ENCODE measurements at regions of chr22 and their contacts with region 1.

Region 1: DNA sequence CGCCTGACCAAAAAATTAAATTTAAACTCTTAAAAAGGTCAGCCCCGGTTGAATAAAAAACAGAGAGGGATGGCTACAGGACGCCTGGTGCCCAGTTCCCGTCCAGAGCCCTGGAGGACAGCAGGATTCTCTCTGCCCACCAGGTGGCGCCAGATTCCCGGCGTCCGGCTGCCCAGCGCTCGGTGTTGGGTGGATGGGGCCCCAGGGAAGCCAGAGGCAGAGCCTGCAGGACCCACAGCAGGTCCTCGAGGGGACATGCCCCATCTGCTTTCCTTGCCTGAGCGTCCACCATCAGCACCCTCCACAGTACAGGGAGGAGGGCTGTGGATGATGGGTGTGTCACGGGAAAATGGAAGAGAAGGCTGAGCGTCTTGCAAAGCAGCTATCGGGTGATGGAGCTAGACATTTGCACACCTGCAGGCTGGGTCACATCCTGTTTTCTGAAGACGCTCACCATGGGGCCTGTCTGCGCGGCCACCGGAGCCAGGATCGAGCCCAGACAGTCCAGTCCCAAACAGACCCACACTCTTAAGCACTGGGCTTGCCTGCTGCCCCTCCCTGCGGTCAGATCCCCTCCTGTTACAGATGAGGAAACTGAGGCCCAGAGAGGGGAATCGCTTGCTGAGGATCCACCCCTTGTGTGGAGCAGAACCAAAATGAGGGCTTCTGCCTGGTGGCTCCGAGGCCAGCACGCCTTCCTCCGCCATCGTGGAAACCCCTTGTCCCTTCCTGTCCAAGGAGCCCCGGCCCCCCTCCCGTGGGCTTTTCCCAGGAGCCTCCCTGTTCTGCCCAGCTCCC is 18.5 kb upstream of the CBX7 start:
- DNase-seq: peak; percentile 73 to 95 (median 85)
- ATAC-seq: peak; percentile 57
- H3K4me3 ChIP-seq: peak overlapping the region; percentile 26 to 28
- H3K4me3 Mint-ChIP-seq: peak overlapping the region; percentile 54
- H3K27ac ChIP-seq: peak overlapping the region; percentile 25 to 42
- H3K27ac Mint-ChIP-seq: peak overlapping the region; percentile 94
- H3K4me1 ChIP-seq: peaks cover 49% of the 10 kb centered on the region
- H3K4me1 Mint-ChIP-seq: peaks cover 47% of the 10 kb centered on the region
- H3K27me3 ChIP-seq: peaks cover 0 to 3% of the 10 kb centered on the region in 2 experiments
- H3K27me3 Mint-ChIP-seq: no peaks in the 10 kb centered on the region
- CTCF ChIP-seq: peak; percentile 98

Region 2: DNA sequence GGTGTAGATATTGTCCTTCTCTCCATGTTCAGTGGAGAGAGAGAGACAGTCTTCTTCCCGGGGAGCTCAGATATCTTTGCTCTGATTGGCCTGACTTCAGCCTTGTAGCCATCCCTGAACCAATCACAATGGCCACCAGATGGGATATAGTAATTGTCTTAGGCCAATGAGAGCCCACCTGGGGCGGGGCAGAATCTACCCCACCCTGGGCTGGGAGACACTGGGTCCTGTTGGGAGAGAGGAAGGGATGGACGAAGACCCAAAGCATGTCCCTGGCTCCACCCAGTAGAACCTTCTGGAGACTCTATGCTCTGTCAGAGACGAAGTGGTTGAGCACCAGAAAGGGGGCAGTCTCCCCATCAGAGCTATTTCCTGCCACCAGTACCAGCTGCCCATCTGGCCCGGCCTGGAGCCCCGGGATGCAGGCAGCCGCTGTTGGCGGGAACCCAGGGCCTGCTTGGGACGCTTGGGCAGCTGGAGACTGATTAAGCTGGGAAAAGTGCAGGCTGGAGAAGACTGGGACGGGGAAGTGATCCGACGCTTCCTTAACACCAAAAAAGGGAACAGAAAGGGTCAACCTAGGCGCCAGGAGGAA is 13.1 kb after region 1 on chr22:
- CTCF ChIA-PET with region 1: interaction called, 21 read pairs
- POLR2A ChIA-PET with region 1: interaction called, 3 read pairs
- intact Hi-C with region 1: no loop called
- DNase-seq: peak in 1 of 9 experiments; percentile 35
- ATAC-seq: no peak
- H3K4me3 ChIP-seq: no peak overlapping the region
- H3K4me3 Mint-ChIP-seq: no peak overlapping the region
- H3K27ac ChIP-seq: no peak overlapping the region
- H3K27ac Mint-ChIP-seq: no peak overlapping the region
- H3K4me1 ChIP-seq: no peaks in the 10 kb centered on the region
- H3K4me1 Mint-ChIP-seq: peaks cover 3% of the 10 kb centered on the region
- H3K27me3 ChIP-seq: no peaks in the 10 kb centered on the region
- H3K27me3 Mint-ChIP-seq: no peaks in the 10 kb centered on the region
- CTCF ChIP-seq: no peak

Region 3: DNA sequence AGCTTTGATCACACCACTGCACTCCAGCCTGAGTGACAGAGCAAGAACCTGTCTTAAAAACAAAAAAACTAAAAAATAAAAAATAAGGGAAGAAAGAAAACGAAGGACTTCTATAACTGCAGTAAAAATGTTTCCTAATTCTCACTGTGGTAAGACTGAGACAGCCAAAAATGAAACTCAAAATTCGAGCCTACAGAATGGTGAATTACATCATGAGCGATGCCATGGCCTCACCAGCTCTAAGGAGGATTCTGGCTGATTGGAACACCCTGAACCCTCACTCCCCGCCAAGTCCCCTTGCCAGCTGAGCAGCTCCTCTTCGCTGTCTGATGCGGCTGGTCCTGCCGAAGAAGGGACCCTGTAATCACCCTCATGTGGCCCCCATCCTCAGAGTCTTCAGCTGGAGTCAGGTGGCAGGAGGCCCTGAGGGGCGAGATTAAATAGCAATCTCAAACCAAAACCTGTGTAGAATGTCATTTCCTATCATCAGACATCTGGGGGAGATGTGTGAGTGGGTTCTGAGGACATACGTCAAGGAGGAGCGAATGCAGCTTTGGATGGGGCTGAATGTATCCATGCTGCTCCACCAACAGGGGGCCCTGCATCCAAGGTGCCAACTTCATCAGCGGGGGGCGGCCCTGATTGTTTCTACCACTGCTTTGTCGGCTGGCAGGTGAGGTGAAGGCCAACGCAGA is 44.5 kb after region 1 on chr22:
- CTCF ChIA-PET with region 1: interaction called, 19 read pairs
- POLR2A ChIA-PET with region 1: no interaction called
- intact Hi-C with region 1: loop called in 1 of 2 experiments (anchors 5 kb)
- DNase-seq: peak in 5 of 9 experiments; percentile 60 to 78 (median 67)
- ATAC-seq: peak; percentile 98
- H3K4me3 ChIP-seq: no peak overlapping the region
- H3K4me3 Mint-ChIP-seq: no peak overlapping the region
- H3K27ac ChIP-seq: no peak overlapping the region
- H3K27ac Mint-ChIP-seq: peak overlapping the region; percentile 57
- H3K4me1 ChIP-seq: peaks cover 4% of the 10 kb centered on the region
- H3K4me1 Mint-ChIP-seq: peaks cover 6% of the 10 kb centered on the region
- H3K27me3 ChIP-seq: no peaks in the 10 kb centered on the region
- H3K27me3 Mint-ChIP-seq: peaks cover 18% of the 10 kb centered on the region
- CTCF ChIP-seq: peak; percentile 42

Region 4: DNA sequence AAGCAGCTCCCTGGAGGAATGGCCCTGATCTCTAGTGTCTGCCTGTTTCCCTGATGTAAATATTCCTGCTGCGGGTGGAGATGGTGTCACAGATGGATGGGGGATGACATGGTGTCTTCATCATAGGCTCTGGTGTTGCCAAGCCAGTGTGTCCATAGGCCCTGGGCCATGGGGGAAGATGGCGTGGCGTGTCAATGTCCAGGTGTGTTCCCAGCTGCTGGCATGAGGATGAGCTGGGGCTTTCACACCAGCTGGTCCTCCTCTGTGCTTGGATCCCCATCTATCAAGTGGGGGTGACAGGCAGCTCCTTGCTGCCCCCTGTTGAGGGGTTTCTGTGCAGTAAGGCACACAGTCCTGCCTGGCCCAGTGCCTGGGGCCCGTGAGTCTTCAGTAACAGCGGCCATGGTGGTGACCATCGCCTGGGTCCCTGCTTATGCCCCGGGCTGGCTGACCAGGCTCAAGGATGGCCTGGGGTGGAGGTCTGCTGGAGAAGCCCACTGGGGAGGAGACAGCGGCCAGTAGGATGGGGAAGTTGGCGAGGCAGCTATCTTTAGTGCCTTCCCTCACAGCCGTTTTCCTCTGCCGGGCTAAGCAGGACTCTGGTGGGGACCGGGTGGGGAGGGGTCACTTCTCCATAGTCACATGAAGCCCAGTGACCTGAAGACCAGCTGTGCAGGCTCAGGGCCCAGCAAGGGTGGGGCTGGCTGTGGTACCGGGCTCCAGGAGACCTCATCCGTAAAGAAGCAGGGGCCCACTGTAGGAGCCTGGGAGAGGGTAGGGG is 135.7 kb after region 1 on chr22:
- CTCF ChIA-PET with region 1: interaction called, 386 read pairs
- POLR2A ChIA-PET with region 1: interaction called, 14 read pairs
- intact Hi-C with region 1: loop called (anchors 1 kb)
- DNase-seq: peak in 8 of 9 experiments; percentile 28 to 75 (median 60)
- ATAC-seq: peak; percentile 41
- H3K4me3 ChIP-seq: no peak overlapping the region
- H3K4me3 Mint-ChIP-seq: no peak overlapping the region
- H3K27ac ChIP-seq: no peak overlapping the region
- H3K27ac Mint-ChIP-seq: no peak overlapping the region
- H3K4me1 ChIP-seq: no peaks in the 10 kb centered on the region
- H3K4me1 Mint-ChIP-seq: peaks cover 9% of the 10 kb centered on the region
- H3K27me3 ChIP-seq: no peaks in the 10 kb centered on the region
- H3K27me3 Mint-ChIP-seq: no peaks in the 10 kb centered on the region
- CTCF ChIP-seq: no peak

Measured in CD8-positive, alpha-beta T cell (primary cell).